Vagina (tissue), 2 donors: ENCODE measurements at regions of chr1 and their contacts with region 1.

Region 1: DNA sequence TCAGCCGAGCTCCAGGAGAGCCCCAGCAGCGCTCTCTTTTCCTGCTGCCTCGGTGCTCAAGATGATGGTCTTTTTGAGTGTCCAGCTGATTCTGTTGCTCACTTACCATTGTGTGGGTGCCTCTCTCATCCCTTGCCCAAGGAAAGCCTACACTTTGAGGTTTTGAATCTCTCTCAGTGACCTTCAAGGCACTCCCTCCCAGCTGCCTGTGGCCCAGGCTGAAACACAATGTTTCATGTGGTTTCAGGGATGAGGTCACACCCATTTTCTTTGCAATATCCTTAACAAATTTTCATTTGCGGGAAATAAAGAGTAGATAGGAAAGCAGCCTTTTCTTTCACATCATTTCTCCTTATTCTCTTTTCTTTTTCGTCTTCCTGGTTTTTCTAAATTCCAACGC is 12.6 kb upstream of the MRPS14 start:
- DNase-seq: no peak
- H3K4me3 ChIP-seq: no peak overlapping the region
- H3K27ac ChIP-seq: no peak overlapping the region
- H3K4me1 ChIP-seq: no peaks in the 10 kb centered on the region
- H3K27me3 ChIP-seq: no peaks in the 10 kb centered on the region
- CTCF ChIP-seq: no peak
- POLR2A ChIP-seq: no peak

Region 2: DNA sequence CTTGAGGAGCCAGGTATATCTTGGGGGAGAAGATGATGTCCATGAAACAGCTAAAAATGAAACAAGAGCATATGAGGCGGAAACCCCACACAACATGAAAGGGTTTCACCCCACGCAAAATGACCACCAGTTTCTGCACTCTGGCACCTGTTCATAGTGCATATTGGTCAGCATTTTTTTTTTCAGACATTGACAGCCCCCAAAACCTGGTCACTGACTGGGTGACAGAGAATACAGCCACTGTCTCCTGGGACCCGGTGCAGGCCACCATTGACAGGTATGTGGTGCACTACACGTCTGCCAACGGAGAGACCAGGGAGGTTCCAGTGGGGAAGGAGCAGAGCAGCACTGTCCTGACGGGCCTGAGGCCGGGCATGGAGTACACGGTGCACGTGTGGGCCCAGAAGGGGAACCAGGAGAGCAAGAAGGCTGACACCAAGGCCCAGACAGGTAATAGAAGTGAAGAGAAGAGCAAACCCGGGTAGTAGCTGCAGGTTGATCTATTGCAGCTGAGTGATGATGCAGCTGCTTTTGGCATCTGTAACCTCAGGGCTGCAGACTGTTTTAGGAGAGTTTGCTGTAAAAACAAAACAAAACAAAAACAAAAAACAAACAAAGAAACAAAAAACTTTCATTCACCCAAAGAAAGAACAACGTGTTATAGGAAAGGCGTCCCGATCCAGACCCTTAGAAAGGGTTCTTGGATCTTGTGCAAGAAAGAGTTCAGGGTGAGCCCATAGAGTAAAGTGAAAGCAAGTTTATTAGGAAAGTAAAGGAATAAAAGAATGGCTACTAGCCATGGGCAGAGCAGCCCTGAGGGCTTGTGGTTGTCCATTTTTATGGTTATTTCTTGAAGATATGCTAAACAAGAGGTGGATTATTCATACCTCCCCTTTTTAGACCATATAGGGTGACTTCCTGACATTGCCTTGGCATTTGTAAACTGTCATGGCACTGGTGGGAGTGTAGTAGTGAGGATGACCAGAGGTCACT is 82.8 kb after region 1 on chr1:
- intact Hi-C with region 1: loop called (anchors 10 kb)
- DNase-seq: no peak
- H3K4me3 ChIP-seq: no peak overlapping the region
- H3K27ac ChIP-seq: no peak overlapping the region
- H3K4me1 ChIP-seq: no peaks in the 10 kb centered on the region
- H3K27me3 ChIP-seq: no peaks in the 10 kb centered on the region
- CTCF ChIP-seq: no peak
- POLR2A ChIP-seq: no peak

Region 3: GRCh38 chr1:175319418-175320230 is 283.8 kb after region 1 on chr1:
- intact Hi-C with region 1: loop called (anchors 10 kb)
- DNase-seq: no peak
- H3K4me3 ChIP-seq: no peak overlapping the region
- H3K27ac ChIP-seq: peak overlapping the region; percentile 17
- H3K4me1 ChIP-seq: peaks cover 29% of the 10 kb centered on the region
- H3K27me3 ChIP-seq: no peaks in the 10 kb centered on the region
- CTCF ChIP-seq: peak; percentile 79 to 89 (median 83)
- POLR2A ChIP-seq: no peak